Left cardiac atrium (tissue), 4 donors: ENCODE measurements at regions of chr11 and their contacts with region 1.

Region 1: DNA sequence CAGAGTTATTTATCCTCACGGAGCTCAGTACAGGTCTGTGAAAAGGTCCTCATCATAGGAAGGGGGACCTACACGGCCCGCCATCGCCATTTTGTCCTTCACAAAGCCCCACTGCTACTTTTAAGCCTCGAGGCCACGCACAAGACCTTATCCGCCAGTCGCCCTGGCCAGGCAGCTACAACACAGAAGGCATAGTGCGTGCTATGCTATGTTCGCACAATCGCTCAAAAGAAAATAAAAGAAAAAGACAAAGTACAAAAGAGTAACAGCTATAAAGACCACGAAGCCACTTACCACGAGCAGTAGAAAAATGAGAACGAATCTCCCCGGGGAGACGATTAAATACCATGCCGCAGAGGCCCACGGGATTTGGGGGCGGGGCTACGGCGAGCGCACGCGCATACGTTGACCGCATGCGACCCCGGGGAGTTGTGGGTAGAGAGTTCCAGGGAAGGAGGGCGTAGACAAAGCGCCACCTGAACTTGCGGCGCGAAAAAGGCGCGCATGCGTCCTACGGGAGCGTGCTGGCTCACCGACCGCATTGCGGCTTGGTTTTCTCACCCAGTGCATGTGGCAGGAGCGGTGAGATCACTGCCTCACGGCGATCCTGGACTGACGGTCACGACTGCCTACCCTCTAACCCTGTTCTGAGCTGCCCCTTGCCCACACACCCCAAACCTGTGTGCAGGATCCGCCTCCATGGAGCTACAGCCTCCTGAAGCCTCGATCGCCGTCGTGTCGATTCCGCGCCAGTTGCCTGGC is 16.4 kb upstream of the WDR74 start:
- DNase-seq: peak; percentile 96
- ATAC-seq: peak; percentile 98

Region 2: DNA sequence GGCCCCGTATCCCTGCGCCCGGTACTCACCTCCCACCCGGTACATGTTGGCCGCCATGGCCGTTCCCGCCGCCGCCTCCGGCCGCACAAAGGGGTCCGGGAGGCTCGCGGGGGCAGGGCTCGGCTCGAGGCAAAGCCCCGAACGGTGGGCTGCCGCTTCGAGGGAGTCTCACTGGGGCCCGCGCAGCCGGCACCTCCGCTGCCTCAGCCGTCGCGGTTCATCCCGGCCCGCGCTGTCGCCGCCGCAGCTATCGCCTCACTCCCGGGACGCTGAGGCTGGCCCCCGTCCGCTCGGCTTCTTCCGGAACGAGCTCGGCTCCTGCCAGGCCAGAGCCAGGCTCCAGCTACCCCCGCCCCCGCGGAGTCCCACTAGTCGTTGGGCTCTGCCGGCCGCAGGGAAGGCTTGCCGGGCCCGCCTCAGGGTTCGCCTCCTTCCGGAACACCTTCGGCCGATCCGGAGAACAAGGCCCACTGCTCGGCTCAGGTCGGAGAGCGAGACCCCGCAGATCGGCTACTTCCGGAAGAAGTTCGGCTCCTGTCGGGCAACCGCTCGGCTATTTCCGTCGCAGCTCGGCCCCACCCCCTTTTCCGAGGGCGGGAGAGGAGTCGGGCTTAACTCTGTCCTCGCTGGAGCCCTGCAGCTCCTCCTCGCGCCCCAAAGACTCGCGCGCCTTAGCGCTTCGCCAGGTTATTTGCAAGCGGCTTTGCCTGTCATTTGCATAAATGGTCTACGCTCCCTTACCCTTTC is 254.2 kb before region 1 on chr11 and contains the start of gene MTA2:
- intact Hi-C with region 1: loop called in 1 of 2 experiments (anchors 10 kb)
- DNase-seq: peak; percentile 97
- ATAC-seq: peak; percentile 86 to 91
- total RNA-seq, gene MTA2: 38.1 to 60.6 TPM

Region 3: GRCh38 chr11:62753736-62754603 is 101.8 kb before region 1 on chr11 and contains the start of gene ZBTB3:
- intact Hi-C with region 1: no loop called
- DNase-seq: peak; percentile 97
- ATAC-seq: peak; percentile 99
- total RNA-seq, gene ZBTB3: 7.2 to 10.5 TPM